PC-9 (cell line): ENCODE measurements at regions of chr13 and their contacts with region 1.

Region 1: DNA sequence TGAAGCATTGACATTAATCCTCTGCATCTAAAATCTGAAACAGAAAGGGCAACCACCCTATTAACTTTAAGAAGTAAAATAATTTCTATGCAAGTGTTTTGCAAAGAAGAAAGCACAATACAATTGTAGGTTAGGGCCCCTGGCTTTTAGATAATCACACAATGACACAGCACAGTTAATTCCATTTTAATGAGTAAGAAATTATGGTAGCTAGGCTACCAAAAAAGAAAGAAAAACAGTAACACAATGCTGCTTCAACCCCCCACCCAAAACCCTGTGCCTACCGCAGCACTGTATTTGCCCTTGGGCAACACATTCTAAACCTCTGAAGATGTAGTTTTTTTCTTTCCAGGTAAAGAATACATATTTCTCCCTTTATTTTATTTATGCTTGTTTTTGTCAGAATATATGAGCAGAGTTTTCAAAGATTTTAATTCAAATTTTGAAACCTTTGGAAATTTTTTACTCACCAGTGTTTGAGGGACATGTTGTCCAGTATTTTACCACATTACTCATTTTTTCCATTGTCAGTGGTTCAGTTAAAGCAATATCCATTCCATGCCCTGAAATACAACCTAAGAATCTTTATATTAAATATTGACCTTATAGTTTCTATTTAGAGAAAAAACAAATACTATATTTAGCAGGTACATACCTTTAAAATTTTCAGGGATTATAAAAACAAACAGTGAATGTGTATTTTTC is 21.1 kb downstream of the SOHLH2 start:
- DNase-seq: peak; percentile 57 to 80
- H3K4me3 ChIP-seq: no peak overlapping the region
- H3K27ac ChIP-seq: peak overlapping the region; percentile 69
- H3K4me1 ChIP-seq: peaks cover 23% of the 10 kb centered on the region
- H3K27me3 ChIP-seq: no peaks in the 10 kb centered on the region
- CTCF ChIP-seq: no peak

Region 2: DNA sequence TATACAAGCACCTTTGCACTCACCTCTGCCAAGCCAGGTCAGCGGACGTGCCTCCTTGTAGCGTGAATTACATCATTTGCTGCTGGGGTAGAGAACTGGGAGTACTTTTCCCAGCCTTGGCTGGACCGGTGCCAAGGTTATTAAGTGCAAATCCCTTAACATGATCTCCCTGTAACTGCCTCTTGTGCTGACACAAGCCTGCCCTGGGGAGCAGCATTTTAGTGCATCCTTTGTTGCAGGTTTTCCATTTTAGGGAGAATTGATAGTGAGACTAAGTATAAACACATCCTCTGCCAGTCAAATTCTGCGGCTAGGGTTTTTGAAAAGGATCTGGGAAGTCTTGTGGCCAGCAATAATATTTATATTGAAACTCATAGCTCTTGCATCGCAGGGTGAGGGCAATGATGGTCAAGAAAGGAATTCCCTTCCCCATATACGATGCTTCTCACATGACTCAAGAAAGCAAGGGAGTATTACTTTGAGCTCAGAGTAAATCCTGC is 29.4 kb before region 1 on chr13:
- CTCF ChIA-PET with region 1: no interaction called
- POLR2A ChIA-PET with region 1: interaction called, 7 read pairs
- intact Hi-C with region 1: loop called (anchors 2 kb)
- DNase-seq: peak; percentile 76
- H3K4me3 ChIP-seq: no peak overlapping the region
- H3K27ac ChIP-seq: peak overlapping the region; percentile 76
- H3K4me1 ChIP-seq: peaks cover 24% of the 10 kb centered on the region
- H3K27me3 ChIP-seq: no peaks in the 10 kb centered on the region
- CTCF ChIP-seq: no peak

Region 3: GRCh38 chr13:36207672-36208071 is 14.4 kb after region 1 on chr13:
- CTCF ChIA-PET with region 1: no interaction called
- POLR2A ChIA-PET with region 1: interaction called, 11 read pairs
- intact Hi-C with region 1: no loop called
- DNase-seq: no peak
- H3K4me3 ChIP-seq: no peak overlapping the region
- H3K27ac ChIP-seq: no peak overlapping the region
- H3K4me1 ChIP-seq: no peaks in the 10 kb centered on the region
- H3K27me3 ChIP-seq: no peaks in the 10 kb centered on the region
- CTCF ChIP-seq: no peak

Region 4: DNA sequence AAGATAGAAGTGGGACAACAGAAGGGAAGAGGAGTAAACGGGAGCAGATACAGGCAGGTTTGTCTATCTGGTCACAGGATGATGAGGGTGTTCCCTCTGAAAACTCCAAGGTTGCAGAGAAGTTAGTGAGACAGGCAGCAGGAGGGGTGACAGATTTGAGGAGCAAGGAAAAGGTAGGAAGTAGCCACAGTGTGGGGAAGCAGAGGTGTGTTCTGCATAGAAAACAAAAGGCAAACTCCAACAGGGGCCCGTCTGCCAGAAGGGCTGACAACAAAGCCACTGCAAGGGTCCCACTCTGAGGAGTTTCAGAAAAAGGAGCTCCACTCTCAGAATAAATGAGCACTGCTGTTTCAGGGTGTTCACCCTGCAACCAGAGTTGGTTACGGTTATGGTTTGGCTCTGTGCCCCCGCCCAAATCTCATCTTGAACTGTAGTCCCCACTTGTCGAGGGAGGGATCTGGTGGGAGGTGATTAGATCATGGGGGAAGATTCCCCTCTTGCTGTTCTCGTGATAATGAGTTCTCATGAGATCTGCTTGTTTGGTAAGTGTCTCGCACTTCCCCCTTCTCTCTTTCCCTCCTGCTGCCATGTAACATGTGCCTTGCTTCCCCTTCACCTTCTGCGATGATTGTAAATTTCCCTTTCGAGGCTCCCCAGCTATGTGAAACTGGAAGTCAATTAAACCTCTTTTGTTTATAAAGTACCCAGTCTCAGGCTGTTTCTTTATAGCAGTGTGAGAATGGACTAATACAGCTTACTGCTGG is 694.6 kb after region 1 on chr13:
- CTCF ChIA-PET with region 1: no interaction called
- POLR2A ChIA-PET with region 1: no interaction called
- intact Hi-C with region 1: no loop called
- DNase-seq: no peak
- H3K4me3 ChIP-seq: no peak overlapping the region
- H3K27ac ChIP-seq: no peak overlapping the region
- H3K4me1 ChIP-seq: no peaks in the 10 kb centered on the region
- H3K27me3 ChIP-seq: no peaks in the 10 kb centered on the region
- CTCF ChIP-seq: no peak